PC-9 (cell line): ENCODE measurements at regions of chr19 and their contacts with region 1.

Region 1: GRCh38 chr19:6737284-6738046 is at the start of gene GPR108:
- DNase-seq: peak; percentile 96 to 98
- H3K4me3 ChIP-seq: peak within 1 kb of the TSS; percentile 82
- H3K27ac ChIP-seq: peak within 1 kb of the TSS; percentile 81
- H3K4me1 ChIP-seq: peaks cover 28% of the 10 kb centered on the region
- H3K27me3 ChIP-seq: no peaks in the 10 kb centered on the region
- CTCF ChIP-seq: no peak
- total RNA-seq, gene GPR108: 58.3 and 66.8 TPM in 2 replicates

Region 2: DNA sequence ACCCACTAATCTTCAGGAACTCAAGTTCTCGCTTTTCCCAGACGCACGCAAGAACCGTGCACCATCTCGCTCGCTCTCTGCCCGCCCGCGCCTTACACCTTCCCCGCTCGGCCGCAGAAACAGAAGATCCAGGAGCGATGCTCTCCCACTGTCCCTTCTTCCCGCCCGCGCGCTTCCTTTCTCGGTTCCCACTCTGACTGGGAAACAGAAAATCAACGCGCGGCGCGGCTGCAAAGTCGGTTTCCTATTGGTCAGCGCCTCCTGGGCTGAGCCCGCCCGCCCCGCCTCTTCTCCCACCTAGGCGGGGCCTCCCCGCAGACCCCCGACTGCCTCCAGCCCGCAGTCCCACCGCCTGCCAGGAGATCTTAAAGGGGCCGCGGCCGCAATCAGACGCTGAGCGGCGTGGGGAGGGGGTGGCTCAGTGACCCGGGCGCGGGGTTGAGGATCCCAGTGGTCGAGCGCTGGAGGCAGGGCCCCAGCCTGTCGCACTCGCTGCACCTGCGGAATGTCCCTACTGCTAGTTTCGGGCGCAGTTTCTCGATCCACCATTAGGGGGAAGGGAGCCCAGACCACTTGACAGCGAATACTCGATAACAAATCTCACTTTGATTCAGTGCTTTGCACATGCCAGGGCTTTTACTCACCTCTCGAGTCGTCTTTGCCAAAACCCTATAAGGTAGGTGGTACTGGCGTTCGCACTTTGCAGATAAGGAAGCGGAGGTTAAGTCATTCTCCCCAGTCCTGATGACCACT is 277.2 kb before region 1 on chr19:
- CTCF ChIA-PET with region 1: no interaction called
- POLR2A ChIA-PET with region 1: no interaction called
- intact Hi-C with region 1: loop called (anchors 5 kb)
- DNase-seq: peak; percentile 93 to 94
- H3K4me3 ChIP-seq: peak overlapping the region; percentile 68
- H3K27ac ChIP-seq: peak overlapping the region; percentile 88
- H3K4me1 ChIP-seq: peaks cover 2% of the 10 kb centered on the region
- H3K27me3 ChIP-seq: no peaks in the 10 kb centered on the region
- CTCF ChIP-seq: peak; percentile 63

Region 3: GRCh38 chr19:6632002-6632621 is 105.4 kb before region 1 on chr19:
- CTCF ChIA-PET with region 1: no interaction called
- POLR2A ChIA-PET with region 1: no interaction called
- intact Hi-C with region 1: loop called (anchors 1 kb)
- DNase-seq: peak; percentile 50 to 60
- H3K4me3 ChIP-seq: no peak overlapping the region
- H3K27ac ChIP-seq: no peak overlapping the region
- H3K4me1 ChIP-seq: no peaks in the 10 kb centered on the region
- H3K27me3 ChIP-seq: no peaks in the 10 kb centered on the region
- CTCF ChIP-seq: peak; percentile 80

Region 4: GRCh38 chr19:6767357-6768235 is 30.1 kb after region 1 on chr19 and contains the start of gene SH2D3A:
- CTCF ChIA-PET with region 1: no interaction called
- POLR2A ChIA-PET with region 1: no interaction called
- intact Hi-C with region 1: loop called (anchors 1 kb)
- DNase-seq: peak; percentile 81 to 93
- H3K4me3 ChIP-seq: peak within 1 kb of the TSS; percentile 74
- H3K27ac ChIP-seq: peak within 1 kb of the TSS; percentile 98
- H3K4me1 ChIP-seq: peaks cover 26% of the 10 kb centered on the region
- H3K27me3 ChIP-seq: no peaks in the 10 kb centered on the region
- CTCF ChIP-seq: no peak
- total RNA-seq, gene SH2D3A: 43.3 and 43.4 TPM in 2 replicates

Region 5: GRCh38 chr19:6862673-6863078 is 125.2 kb after region 1 on chr19:
- CTCF ChIA-PET with region 1: interaction called, 3 read pairs
- POLR2A ChIA-PET with region 1: no interaction called
- intact Hi-C with region 1: loop called (anchors 1 kb)
- DNase-seq: peak; percentile 75 to 84
- H3K4me3 ChIP-seq: peak overlapping the region; percentile 38; the same call in 1 of the 2 replicates
- H3K27ac ChIP-seq: 0 out of 2 replicates have a peak overlapping the region, but pooled peaks have one; percentile 16
- H3K4me1 ChIP-seq: peaks cover 16% of the 10 kb centered on the region
- H3K27me3 ChIP-seq: no peaks in the 10 kb centered on the region
- CTCF ChIP-seq: peak; percentile 86